Right ventricle myocardium inferior (tissue), 1 donor: ENCODE measurements at regions of chr5 and their contacts with region 1.

Region 1: DNA sequence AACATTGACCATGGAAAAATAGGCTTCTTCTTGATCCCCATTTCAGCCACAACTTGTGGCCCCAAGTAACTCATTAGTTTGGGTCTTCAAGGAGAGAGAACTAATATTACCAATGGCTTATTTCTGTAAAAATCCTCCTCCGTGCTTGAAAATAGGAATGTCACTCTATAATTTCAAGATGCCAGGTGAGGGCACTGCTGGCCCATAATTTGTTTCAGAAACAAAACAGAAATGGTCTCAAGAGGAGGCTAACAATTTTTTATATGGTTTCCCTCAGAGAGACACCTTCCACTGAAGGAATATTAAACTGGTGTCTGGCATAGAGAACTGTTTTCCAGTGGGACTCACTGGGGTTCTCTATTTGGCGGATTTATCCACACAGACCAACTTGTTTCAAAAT is 437.0 kb upstream of the TRPC7 start:
- DNase-seq: no peak
- ATAC-seq: no peak

Region 2: DNA sequence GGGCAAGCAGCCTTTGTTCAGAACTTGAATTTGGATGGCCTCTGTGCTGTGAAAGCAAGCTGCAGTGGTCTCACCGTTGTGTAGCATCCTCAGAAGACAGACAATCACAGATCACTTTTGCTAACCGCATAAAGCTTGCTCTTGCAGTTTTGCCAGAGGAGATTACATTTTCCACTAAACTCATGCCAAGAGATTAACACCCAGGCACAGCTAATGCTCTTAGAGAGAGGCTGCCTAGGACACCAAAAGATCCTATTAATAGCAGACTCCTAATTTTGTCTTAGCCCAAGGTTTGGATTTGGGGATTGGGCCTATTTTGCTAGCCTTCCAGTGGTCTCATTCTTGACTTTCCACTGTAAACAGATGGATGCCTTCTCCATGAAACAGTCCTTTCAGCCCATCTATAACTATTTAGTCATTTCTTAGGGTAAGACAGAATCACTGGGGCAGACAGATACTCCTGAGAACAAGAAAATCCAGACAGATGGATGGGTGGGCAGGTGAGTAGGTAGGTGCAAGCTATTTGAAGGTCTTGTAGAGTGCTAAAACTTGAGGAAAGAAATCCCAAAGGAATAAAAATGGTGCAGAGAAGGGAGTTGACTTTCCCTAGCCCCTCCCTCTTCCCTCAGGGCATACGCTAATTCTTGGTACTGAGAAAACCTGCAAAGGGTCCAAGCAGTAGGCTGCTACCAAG is 190.6 kb after region 1 on chr5:
- intact Hi-C with region 1: loop called (anchors 5 kb)
- DNase-seq: no peak
- ATAC-seq: peak; percentile 79

Region 3: GRCh38 chr5:137051165-137051564 is 248.8 kb after region 1 on chr5:
- intact Hi-C with region 1: loop called (anchors 10 kb)
- DNase-seq: no peak
- ATAC-seq: no peak

Region 4: DNA sequence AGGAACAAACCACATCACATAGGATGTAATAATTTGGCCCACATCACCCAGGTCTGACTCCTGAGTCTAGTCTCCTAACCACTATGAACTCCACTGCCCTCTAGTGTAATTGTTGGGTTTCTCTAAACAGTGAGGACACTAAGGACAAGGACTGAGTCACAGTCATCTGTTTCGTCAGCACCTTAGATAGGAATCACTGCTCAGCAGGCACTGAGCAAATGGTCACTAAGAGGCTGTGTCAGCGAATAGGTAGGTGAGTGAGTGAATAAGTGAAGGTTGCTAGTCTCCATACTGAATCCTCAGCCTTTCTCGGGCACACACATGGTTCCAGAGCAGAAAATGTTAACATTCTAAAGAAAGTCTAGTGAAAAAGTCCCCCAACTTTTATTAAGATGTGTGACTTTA is 418.1 kb after region 1 on chr5:
- intact Hi-C with region 1: loop called (anchors 5 kb)
- DNase-seq: no peak
- ATAC-seq: peak; percentile 55

Region 5: GRCh38 chr5:137498736-137499505 is 696.5 kb after region 1 on chr5 and contains the start of gene SPOCK1:
- intact Hi-C with region 1: loop called (anchors 5 kb)
- DNase-seq: peak; percentile 88
- ATAC-seq: peak; percentile 94
- total RNA-seq, gene SPOCK1: 35.5 TPM